Dorsolateral prefrontal cortex (tissue), 120 donors: ENCODE measurements at regions of chr1 and their contacts with region 1.

Region 1: DNA sequence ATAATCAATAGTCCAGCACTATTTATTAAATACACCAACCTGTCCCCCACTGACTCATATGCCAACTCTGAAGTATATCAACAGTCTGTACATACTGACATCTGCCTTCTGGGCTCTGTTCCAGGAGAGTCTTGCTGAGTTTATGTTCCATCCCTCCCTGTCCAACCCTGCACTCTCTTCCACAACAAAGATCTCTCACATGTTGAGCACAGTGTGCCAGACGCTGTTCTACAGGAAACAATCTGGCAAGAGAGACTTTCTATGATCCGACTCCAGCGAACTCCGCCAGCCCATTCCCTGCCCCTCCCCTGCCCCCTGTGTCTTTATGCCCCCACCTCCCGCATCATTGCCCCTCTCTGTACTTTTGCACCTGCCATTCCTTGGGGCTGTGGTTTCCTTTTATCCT is 3.4 kb downstream of the LACTBL1 start:
- DNase-seq: no peak
- H3K4me3 ChIP-seq: no peak overlapping the region
- H3K27ac ChIP-seq: no peak overlapping the region
- H3K27me3 ChIP-seq: peaks cover 0 to 85% (median 23%) of the 10 kb centered on the region in 45 donors
- CTCF ChIP-seq: no peak

Region 2: GRCh38 chr1:22673486-22674409 is 295.6 kb before region 1 on chr1:
- intact Hi-C with region 1: loop called in 1 of 2 experiments (anchors 10 kb)
- DNase-seq: peak; percentile 23 to 82 (median 64)
- H3K4me3 ChIP-seq: no peak overlapping the region
- H3K27ac ChIP-seq: no peak overlapping the region
- H3K27me3 ChIP-seq: peaks cover 0 to 19% (median 0%) of the 10 kb centered on the region in 45 donors
- CTCF ChIP-seq: peak; percentile 58 to 93 (median 79)

Region 3: GRCh38 chr1:22794647-22795365 is 174.5 kb before region 1 on chr1:
- intact Hi-C with region 1: no loop called
- DNase-seq: no peak
- H3K4me3 ChIP-seq: no peak overlapping the region
- H3K27ac ChIP-seq: peak overlapping the region in 10 of 59 donors; percentile 2 to 52 (median 27)
- H3K27me3 ChIP-seq: no peaks in the 10 kb centered on the region
- CTCF ChIP-seq: no peak